ENCODE measurements at regions of chr13 and their contacts with region 1.

Region 1: GRCh38 chr13:99436686-99437416 is 64.4 kb upstream of the TM9SF2 start:
- DNase-seq: peak; percentile 81
- H3K4me3 Mint-ChIP-seq: peak overlapping the region; percentile 70
- H3K27ac Mint-ChIP-seq: no peak overlapping the region
- H3K4me1 Mint-ChIP-seq: peaks cover 18% of the 10 kb centered on the region
- H3K27me3 Mint-ChIP-seq: peaks cover 19% of the 10 kb centered on the region
- CTCF ChIP-seq: peak; percentile 100

Region 2: DNA sequence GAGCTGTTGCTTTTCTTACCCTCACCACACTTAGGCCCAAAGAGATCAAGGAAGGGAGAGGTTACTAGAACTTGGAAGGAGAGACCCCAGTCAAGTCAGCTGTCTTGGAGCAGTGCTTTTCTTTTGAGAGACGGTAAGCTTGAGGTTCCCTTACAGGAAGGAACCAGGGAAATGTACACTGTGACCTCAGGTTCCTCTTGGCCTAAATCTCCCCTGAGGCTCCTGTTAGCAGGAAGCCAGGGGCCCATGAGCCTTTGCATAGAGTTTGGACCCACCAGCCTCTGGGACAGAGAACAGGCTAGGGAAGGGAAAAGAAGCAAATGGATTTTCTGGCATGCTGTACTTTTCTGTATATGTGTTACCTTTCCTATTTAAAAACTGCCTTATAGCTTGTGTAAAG is 172.8 kb before region 1 on chr13:
- CTCF ChIA-PET with region 1: interaction called, 167 read pairs
- POLR2A ChIA-PET with region 1: interaction called, 10 read pairs
- intact Hi-C with region 1: loop called (anchors 1 kb)
- DNase-seq: no peak
- H3K4me3 Mint-ChIP-seq: no peak overlapping the region
- H3K27ac Mint-ChIP-seq: no peak overlapping the region
- H3K4me1 Mint-ChIP-seq: peaks cover 5% of the 10 kb centered on the region
- H3K27me3 Mint-ChIP-seq: no peaks in the 10 kb centered on the region
- CTCF ChIP-seq: no peak

Region 3: GRCh38 chr13:99335603-99336002 is 101.2 kb before region 1 on chr13:
- CTCF ChIA-PET with region 1: interaction called, 11 read pairs
- POLR2A ChIA-PET with region 1: interaction called, 3 read pairs
- intact Hi-C with region 1: no loop called
- DNase-seq: no peak
- H3K4me3 Mint-ChIP-seq: no peak overlapping the region
- H3K27ac Mint-ChIP-seq: no peak overlapping the region
- H3K4me1 Mint-ChIP-seq: peaks cover 19% of the 10 kb centered on the region
- H3K27me3 Mint-ChIP-seq: no peaks in the 10 kb centered on the region
- CTCF ChIP-seq: no peak

Region 4: GRCh38 chr13:99407906-99408702 is 28.7 kb before region 1 on chr13:
- CTCF ChIA-PET with region 1: interaction called, 11 read pairs
- POLR2A ChIA-PET with region 1: no interaction called
- intact Hi-C with region 1: no loop called
- DNase-seq: no peak
- H3K4me3 Mint-ChIP-seq: no peak overlapping the region
- H3K27ac Mint-ChIP-seq: no peak overlapping the region
- H3K4me1 Mint-ChIP-seq: peaks cover 6% of the 10 kb centered on the region
- H3K27me3 Mint-ChIP-seq: peaks cover 10% of the 10 kb centered on the region
- CTCF ChIP-seq: no peak

Region 5: GRCh38 chr13:99448546-99448945 is 11.7 kb after region 1 on chr13:
- CTCF ChIA-PET with region 1: interaction called, 29 read pairs
- POLR2A ChIA-PET with region 1: interaction called, 3 read pairs
- intact Hi-C with region 1: no loop called
- DNase-seq: no peak
- H3K4me3 Mint-ChIP-seq: no peak overlapping the region
- H3K27ac Mint-ChIP-seq: no peak overlapping the region
- H3K4me1 Mint-ChIP-seq: no peaks in the 10 kb centered on the region
- H3K27me3 Mint-ChIP-seq: peaks cover 17% of the 10 kb centered on the region
- CTCF ChIP-seq: no peak

Region 6: GRCh38 chr13:99501184-99501847 is 64.5 kb after region 1 on chr13 and contains the start of gene TM9SF2:
- CTCF ChIA-PET with region 1: interaction called, 43 read pairs
- POLR2A ChIA-PET with region 1: interaction called, 3 read pairs
- intact Hi-C with region 1: loop called (anchors 1 kb)
- DNase-seq: peak; percentile 96
- H3K4me3 Mint-ChIP-seq: peak within 1 kb of the TSS; percentile 90
- H3K27ac Mint-ChIP-seq: peak within 1 kb of the TSS; percentile 83
- H3K4me1 Mint-ChIP-seq: peaks cover 27% of the 10 kb centered on the region
- H3K27me3 Mint-ChIP-seq: no peaks in the 10 kb centered on the region
- CTCF ChIP-seq: no peak
- total RNA-seq, gene TM9SF2: 71.1 and 77.0 TPM in 2 replicates

Measured in MCF 10A (cell line).